Posterior vena cava (tissue), 2 donors: ENCODE measurements at regions of chr3 and their contacts with region 1.

Region 1: DNA sequence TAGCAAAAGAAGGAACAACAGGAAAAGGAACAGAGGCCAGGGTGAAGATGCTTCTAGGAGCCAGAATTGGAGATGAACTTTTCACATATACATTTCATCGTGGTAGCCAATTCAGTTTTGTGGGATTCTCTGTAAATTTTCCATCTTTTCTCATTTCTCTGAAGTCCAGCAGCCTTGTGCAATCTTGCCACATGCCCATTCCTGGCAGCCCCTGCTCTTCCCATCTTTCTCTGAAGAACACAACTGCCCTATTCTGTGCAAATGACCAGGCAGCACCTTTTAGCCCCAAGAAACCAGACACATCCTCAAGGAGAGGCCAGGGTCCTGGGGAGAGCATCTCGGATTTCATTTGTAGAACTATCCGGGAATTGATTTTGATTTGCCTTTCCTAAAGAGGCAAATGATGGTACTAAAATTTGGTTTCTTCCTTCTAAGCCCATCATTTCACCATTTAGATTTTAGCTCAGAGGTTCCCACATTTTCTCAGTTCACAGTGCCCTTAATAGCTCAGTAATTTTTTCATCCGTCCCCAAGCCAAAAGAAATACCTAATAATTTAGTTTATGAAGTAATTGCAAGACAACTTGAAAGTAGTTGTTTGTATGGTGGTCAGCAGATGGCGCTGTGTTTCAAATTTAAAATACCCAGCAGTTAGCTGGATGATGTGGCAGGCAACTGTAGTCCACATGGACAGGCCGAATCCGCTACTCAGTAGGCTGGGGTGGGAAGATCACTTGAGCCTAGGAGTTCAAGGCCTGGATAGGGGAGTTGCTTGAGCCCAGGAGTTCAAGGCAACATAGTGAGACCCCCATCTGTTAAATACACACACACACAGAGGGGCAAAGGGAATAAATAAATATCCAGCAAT is 61.3 kb upstream of the ACKR4 start:
- DNase-seq: no peak

Region 2: DNA sequence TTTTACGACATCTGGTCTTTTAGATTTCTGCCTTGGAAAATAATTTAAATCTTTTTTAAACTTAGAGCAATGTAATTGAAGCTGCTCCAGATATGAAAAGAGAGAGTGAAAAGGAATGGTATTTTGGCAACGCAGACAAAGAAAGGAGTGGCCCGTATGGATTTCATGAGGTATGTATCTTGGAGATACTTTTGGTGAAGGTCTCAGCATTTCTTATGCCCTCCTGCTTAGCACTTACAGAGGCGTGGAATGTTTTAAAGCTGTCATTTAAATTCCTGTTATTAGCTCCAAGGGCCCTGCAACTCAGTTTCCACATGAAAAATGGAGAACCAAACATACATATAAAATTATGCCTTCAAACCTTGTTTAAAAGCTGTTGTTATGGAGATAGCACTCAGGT is 53.6 kb before region 1 on chr3:
- intact Hi-C with region 1: no loop called
- DNase-seq: no peak

Region 3: GRCh38 chr3:132641837-132642538 is 106.2 kb after region 1 on chr3:
- intact Hi-C with region 1: loop called (anchors 2 kb)
- DNase-seq: no peak